PC-9 (cell line): ENCODE measurements at regions of chr10 and their contacts with region 1.

Region 1: DNA sequence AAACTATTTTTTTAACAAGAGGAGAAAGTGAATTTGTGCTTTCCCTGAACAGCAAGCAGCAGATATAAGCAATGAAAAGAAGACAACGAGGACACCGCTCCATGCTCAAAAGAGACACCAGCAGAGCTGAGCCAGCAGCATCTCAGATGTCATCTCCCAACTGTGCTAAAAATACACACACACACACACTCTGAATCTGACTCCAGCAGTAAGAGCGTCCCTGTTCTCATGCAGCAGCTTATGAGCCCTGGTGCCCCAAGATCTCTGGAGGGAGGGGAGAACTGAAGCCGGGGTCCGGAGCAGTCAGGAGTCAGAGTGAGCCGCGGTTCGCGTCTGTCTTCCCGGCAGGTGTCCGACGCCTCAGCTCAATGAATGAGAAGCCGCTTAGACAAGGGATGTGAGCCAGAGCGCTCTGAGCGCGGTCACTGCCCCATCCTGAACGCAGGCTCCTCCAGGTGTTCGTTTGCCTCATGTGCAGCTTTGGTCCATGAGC is 49.2 kb downstream of the SVIL start:
- DNase-seq: no peak
- H3K4me3 ChIP-seq: no peak overlapping the region
- H3K27ac ChIP-seq: 0 out of 2 replicates have a peak overlapping the region, but pooled peaks have one; percentile 4
- H3K4me1 ChIP-seq: peaks cover 53% of the 10 kb centered on the region
- H3K27me3 ChIP-seq: no peaks in the 10 kb centered on the region
- CTCF ChIP-seq: no peak

Region 2: GRCh38 chr10:29496341-29497162 is 89.0 kb before region 1 on chr10:
- CTCF ChIA-PET with region 1: interaction called, 5 read pairs
- POLR2A ChIA-PET with region 1: interaction called, 13 read pairs
- intact Hi-C with region 1: no loop called
- DNase-seq: peak in 1 of 2 experiments; percentile 64
- H3K4me3 ChIP-seq: no peak overlapping the region
- H3K27ac ChIP-seq: no peak overlapping the region
- H3K4me1 ChIP-seq: no peaks in the 10 kb centered on the region
- H3K27me3 ChIP-seq: no peaks in the 10 kb centered on the region
- CTCF ChIP-seq: peak; percentile 79

Region 3: GRCh38 chr10:29535012-29535777 is 50.3 kb before region 1 on chr10:
- CTCF ChIA-PET with region 1: no interaction called
- POLR2A ChIA-PET with region 1: interaction called, 30 read pairs
- intact Hi-C with region 1: loop called (anchors 2 kb)
- DNase-seq: peak in 1 of 2 experiments; percentile 69
- H3K4me3 ChIP-seq: no peak overlapping the region
- H3K27ac ChIP-seq: 0 out of 2 replicates have a peak overlapping the region, but pooled peaks have one; percentile 9
- H3K4me1 ChIP-seq: no peaks in the 10 kb centered on the region
- H3K27me3 ChIP-seq: no peaks in the 10 kb centered on the region
- CTCF ChIP-seq: peak; percentile 25; the same call in 1 of the 2 replicates

Region 4: DNA sequence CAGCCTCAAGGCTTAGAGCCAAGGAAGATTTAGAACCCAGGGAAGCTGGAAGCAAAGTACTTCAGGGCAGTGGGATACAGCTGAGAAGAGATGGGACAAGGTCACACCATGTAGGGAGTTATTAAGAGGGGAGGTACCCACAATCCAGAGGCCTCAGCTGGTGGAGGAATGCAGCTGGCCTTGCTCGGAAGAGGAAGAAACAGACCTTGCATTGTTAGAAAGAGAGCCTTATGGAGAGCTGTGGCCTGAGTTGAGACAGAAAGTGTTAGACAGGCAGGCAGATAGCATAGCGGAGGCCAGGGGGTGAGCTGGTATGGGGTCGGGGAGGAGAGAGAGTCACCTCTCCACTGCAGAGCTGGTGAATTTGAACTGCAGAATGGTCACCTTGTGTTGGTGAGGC is 300.8 kb after region 1 on chr10:
- CTCF ChIA-PET with region 1: no interaction called
- POLR2A ChIA-PET with region 1: interaction called, 12 read pairs
- intact Hi-C with region 1: no loop called
- DNase-seq: no peak
- H3K4me3 ChIP-seq: no peak overlapping the region
- H3K27ac ChIP-seq: no peak overlapping the region
- H3K4me1 ChIP-seq: no peaks in the 10 kb centered on the region
- H3K27me3 ChIP-seq: no peaks in the 10 kb centered on the region
- CTCF ChIP-seq: no peak

Region 5: DNA sequence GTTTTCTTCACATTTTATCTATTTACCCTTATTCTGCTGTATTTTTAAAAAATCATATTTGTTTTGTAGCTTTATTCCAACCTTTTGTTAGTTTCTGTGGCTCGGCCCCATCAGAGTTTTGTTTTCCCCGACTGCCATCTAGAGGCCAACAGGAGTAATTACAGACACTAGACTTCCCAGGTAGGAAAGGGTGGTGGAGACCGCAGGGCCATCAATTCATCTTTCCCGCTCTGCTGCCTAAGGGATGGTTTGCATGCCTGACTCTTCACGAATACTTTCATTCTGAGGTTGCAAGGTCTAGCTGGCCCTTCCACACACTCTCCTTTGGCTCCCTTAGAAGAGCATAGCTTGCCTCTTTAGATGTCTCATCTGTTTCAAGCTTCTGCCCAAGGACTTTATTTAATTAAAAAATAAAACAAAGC is 1005.7 kb after region 1 on chr10:
- CTCF ChIA-PET with region 1: no interaction called
- POLR2A ChIA-PET with region 1: interaction called, 30 read pairs
- intact Hi-C with region 1: no loop called
- DNase-seq: peak; percentile 33 to 36
- H3K4me3 ChIP-seq: no peak overlapping the region
- H3K27ac ChIP-seq: no peak overlapping the region
- H3K4me1 ChIP-seq: no peaks in the 10 kb centered on the region
- H3K27me3 ChIP-seq: no peaks in the 10 kb centered on the region
- CTCF ChIP-seq: peak; percentile 76